Lower leg skin (tissue), 4 donors: ENCODE measurements at regions of chr10 and their contacts with region 1.

Region 1: DNA sequence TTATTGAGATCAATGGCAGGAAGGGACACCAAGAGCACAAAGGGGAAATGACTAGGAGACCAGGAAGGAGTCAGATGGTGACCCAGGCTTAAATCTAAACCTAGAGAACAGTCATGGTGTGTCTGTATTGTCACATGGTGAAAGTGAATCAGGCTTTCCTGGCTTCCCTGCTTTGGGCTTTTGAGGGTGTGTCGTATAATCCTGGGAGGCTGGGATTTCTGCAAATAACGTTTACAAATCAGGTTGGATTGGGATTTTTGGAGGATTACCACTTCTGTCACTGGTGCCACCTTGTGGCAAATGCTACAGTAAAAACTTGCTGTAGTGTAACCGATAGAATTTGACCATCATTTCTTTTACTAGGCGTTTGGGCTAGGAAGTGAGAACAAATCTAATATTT is 502.6 kb downstream of the NRG3 start:
- DNase-seq: no peak
- H3K4me3 ChIP-seq: no peak overlapping the region
- CTCF ChIP-seq: no peak
- POLR2A ChIP-seq: no peak

Region 2: GRCh38 chr10:82037076-82037475 is 340.5 kb before region 1 on chr10:
- intact Hi-C with region 1: no loop called
- DNase-seq: peak in 1 of 2 donors; percentile 15
- H3K4me3 ChIP-seq: no peak overlapping the region
- CTCF ChIP-seq: no peak
- POLR2A ChIP-seq: no peak

Region 3: DNA sequence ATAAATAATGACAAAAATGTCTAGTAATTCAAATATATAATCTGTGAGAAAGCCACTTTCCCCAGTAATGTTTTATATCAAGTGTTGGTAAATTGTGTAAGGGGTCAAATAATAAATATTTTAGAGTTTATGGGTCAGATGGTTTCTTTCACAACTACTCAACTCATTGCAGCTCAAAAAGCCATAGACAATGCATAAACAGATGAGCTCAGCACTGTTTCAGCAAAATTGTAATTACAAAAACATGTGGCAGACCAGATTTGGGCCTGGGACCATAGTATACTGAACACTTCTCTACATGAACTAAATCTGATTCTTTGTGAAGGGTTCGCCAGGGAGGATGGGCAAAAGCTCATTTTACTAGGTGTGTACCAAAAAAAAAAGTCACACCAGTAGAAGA is 41.8 kb before region 1 on chr10:
- intact Hi-C with region 1: loop called (anchors 2 kb)
- DNase-seq: no peak
- H3K4me3 ChIP-seq: no peak overlapping the region
- CTCF ChIP-seq: no peak
- POLR2A ChIP-seq: no peak

Region 4: GRCh38 chr10:82497439-82497838 is 119.8 kb after region 1 on chr10:
- intact Hi-C with region 1: no loop called
- DNase-seq: no peak
- H3K4me3 ChIP-seq: no peak overlapping the region
- CTCF ChIP-seq: no peak
- POLR2A ChIP-seq: no peak